ENCODE measurements at regions of chr7 and their contacts with region 1.

Region 1: GRCh38 chr7:123635551-123636359 is 19.9 kb upstream of the LMOD2 start:
- DNase-seq: no peak
- ATAC-seq: peak in 7 of 8 donors; percentile 63 to 78 (median 73)
- H3K4me3 ChIP-seq: no peak overlapping the region
- H3K27ac ChIP-seq: peak overlapping the region in 2 of 10 donors; percentile 27 to 70
- H3K4me1 ChIP-seq: peaks cover 3 to 30% (median 9%) of the 10 kb centered on the region in 9 donors
- H3K27me3 ChIP-seq: no peaks in the 10 kb centered on the region
- CTCF ChIP-seq: peak in 8 of 9 donors; percentile 39 to 78 (median 63)

Region 2: DNA sequence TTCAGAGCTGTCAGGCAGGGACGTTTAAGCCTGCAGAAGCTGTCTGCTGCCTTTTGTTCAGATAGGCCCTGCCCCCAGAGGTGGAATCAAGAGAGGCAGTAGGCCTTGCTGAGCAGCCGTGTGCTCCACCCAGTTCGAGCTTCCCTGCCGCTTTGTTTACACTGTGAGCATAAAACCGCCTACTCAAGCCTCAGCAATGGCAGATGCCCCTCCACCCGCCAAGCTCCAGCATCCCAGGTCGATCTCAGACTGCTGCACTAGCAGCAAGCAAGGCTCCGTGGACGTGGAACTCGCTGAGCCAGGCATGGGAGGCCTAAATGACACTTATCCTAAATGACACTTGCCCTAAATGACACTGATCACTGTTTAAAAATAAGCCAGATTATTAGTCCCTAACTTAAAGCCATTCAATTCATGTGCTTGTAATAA is 40.9 kb before region 1 on chr7:
- intact Hi-C with region 1: no loop called
- DNase-seq: no peak
- ATAC-seq: no peak
- H3K4me3 ChIP-seq: no peak overlapping the region
- H3K27ac ChIP-seq: no peak overlapping the region
- H3K4me1 ChIP-seq: peaks cover 0 to 8% (median 0%) of the 10 kb centered on the region in 9 donors
- H3K27me3 ChIP-seq: no peaks in the 10 kb centered on the region
- CTCF ChIP-seq: no peak

Region 3: GRCh38 chr7:123674399-123675180 is 38.8 kb after region 1 on chr7:
- intact Hi-C with region 1: loop called in 1 of 10 experiments (anchors 5 kb)
- DNase-seq: no peak
- ATAC-seq: no peak
- H3K4me3 ChIP-seq: no peak overlapping the region
- H3K27ac ChIP-seq: peak overlapping the region in 7 of 10 donors; percentile 4 to 61 (median 45)
- H3K4me1 ChIP-seq: peaks cover 0 to 54% (median 32%) of the 10 kb centered on the region in 9 donors
- H3K27me3 ChIP-seq: no peaks in the 10 kb centered on the region
- CTCF ChIP-seq: no peak

Region 4: GRCh38 chr7:123748734-123749536 is 113.2 kb after region 1 on chr7 and contains the start of gene WASL:
- intact Hi-C with region 1: loop called in 1 of 10 experiments (anchors 1 kb)
- DNase-seq: peak; percentile 91 to 95
- ATAC-seq: peak; percentile 94 to 98 (median 96)
- H3K4me3 ChIP-seq: peak within 1 kb of the TSS; percentile 80 to 95 (median 89)
- H3K27ac ChIP-seq: peak within 1 kb of the TSS; percentile 94 to 99 (median 98)
- H3K4me1 ChIP-seq: peaks cover 0 to 73% (median 59%) of the 10 kb centered on the region in 9 donors
- H3K27me3 ChIP-seq: no peaks in the 10 kb centered on the region
- CTCF ChIP-seq: peak in 5 of 9 donors; percentile 5 to 33 (median 19)
- total RNA-seq, gene WASL: 21.6 to 30.0 (median 25.2) TPM

Region 5: DNA sequence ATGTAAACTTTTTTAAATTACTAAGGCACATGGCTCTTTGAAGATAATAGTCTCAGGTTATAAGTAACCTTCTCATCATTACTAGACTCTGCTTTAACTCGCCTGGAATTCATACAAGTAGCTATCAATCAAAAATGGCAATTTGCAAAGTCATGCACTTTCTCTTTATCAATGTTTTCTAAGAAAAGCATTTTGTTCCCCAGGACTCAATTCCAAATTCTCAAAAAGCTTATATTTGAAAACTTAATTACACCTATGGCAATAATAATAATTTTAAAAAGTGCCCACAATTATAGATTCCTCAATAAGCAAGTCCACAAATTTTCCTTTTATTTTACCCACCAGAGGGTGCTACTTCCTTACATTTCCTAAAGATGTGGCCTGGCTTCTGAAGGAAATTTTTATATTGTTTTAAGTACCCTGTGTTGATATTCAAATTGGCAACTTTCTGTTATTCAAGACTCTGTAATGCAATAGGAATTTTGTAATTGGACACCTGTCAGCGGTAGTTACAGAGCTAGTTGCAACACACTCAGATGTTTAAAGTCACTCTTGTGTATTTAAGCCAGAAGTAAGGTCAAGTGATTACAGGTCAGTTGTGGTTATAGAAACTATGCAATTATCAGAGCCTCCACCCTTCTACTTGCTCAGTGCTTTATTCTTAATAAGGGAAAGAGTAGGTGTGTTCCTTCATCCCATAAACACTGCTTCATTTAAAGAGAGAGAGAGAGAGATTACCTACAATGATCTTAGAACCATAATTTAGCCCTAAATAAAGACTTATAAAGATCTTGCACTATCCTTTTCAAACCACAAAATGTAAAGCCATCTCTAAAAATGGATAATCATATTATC is 162.1 kb after region 1 on chr7:
- intact Hi-C with region 1: no loop called
- DNase-seq: no peak
- ATAC-seq: peak in 7 of 8 donors; percentile 41 to 71 (median 55)
- H3K4me3 ChIP-seq: no peak overlapping the region
- H3K27ac ChIP-seq: no peak overlapping the region
- H3K4me1 ChIP-seq: peaks cover 0 to 4% (median 0%) of the 10 kb centered on the region in 9 donors
- H3K27me3 ChIP-seq: no peaks in the 10 kb centered on the region
- CTCF ChIP-seq: peak; percentile 20 to 75 (median 63)

Measured in heart right ventricle (tissue), 16 donors.